ENCODE measurements at regions of chr1 and their contacts with region 1.

Region 1: GRCh38 chr1:53485478-53486394 is 26.5 kb downstream of the DMRTB1 start:
- DNase-seq: peak; percentile 88
- CTCF ChIP-seq: peak; percentile 69

Region 2: GRCh38 chr1:53681977-53682685 is 196.4 kb after region 1 on chr1:
- in situ Hi-C with region 1: loop called (anchors 25 kb)
- DNase-seq: peak; percentile 61
- CTCF ChIP-seq: peak; percentile 27